HepG2 (cell line): ENCODE measurements at regions of chr14 and their contacts with region 1.

Region 1: GRCh38 chr14:92783816-92784431 is 10.2 kb upstream of the GOLGA5 start:
- DNase-seq: peak; percentile 56
- ATAC-seq: peak; percentile 85
- H3K4me3 ChIP-seq: no peak overlapping the region
- H3K27ac ChIP-seq: no peak overlapping the region
- H3K4me1 ChIP-seq: peaks cover 20% of the 10 kb centered on the region
- H3K27me3 ChIP-seq: no peaks in the 10 kb centered on the region; a peak in 1 of 5 replicates
- CTCF ChIP-seq: peak; percentile 74
- EP300 ChIP-seq: no peak
- POLR2A ChIP-seq: no peak
- RAD21 ChIP-seq: peak; percentile 37; the same call in 1 of the 2 replicates

Region 2: DNA sequence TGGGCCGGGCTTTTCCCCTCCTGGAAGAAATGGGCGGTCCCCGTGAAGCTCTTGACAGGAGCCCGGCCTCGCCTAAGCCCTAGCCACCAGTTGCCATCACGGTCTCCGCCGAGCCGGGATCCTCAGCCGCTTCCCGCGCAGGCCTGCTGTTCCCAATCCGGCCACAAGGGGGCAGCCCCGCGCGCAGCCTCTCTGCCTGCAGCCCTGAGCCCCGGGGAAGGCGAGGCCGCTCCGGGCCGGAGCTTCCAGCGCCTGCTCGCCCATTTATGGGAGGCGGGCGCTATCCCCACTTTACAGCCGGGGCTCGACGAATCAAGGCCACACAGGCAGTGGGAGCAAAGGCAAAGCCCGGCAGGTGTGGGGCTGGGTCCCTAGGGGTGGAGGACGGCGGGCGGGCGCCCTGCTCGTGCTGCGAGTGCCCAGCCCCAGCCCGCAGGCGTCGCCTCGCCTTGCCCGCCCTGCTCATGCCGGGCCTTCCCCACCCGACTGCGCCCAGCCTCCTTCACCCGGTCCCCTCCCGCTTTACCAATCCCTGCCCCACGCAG is 97.0 kb before region 1 on chr14:
- CTCF ChIA-PET with region 1: interaction called, 16 read pairs
- POLR2A ChIA-PET with region 1: no interaction called
- in situ Hi-C with region 1: no loop called
- intact Hi-C with region 1: no loop called
- DNase-seq: no peak
- ATAC-seq: peak; percentile 88
- H3K4me3 ChIP-seq: no peak overlapping the region; a peak in 1 of 6 replicates
- H3K27ac ChIP-seq: no peak overlapping the region
- H3K4me1 ChIP-seq: no peaks in the 10 kb centered on the region
- H3K27me3 ChIP-seq: no peaks in the 10 kb centered on the region
- CTCF ChIP-seq: peak; percentile 96
- EP300 ChIP-seq: no peak
- POLR2A ChIP-seq: no peak
- RAD21 ChIP-seq: peak; percentile 73

Region 3: GRCh38 chr14:92717571-92718042 is 66.3 kb before region 1 on chr14:
- CTCF ChIA-PET with region 1: interaction called, 68 read pairs
- POLR2A ChIA-PET with region 1: no interaction called
- in situ Hi-C with region 1: loop called (anchors 5 kb)
- intact Hi-C with region 1: loop called (anchors 1 kb)
- DNase-seq: no peak
- ATAC-seq: no peak
- H3K4me3 ChIP-seq: no peak overlapping the region
- H3K27ac ChIP-seq: no peak overlapping the region
- H3K4me1 ChIP-seq: no peaks in the 10 kb centered on the region
- H3K27me3 ChIP-seq: no peaks in the 10 kb centered on the region
- CTCF ChIP-seq: no peak
- EP300 ChIP-seq: no peak
- POLR2A ChIP-seq: no peak
- RAD21 ChIP-seq: no peak